ENCODE measurements at regions of chr10 and their contacts with region 1.

Region 1: DNA sequence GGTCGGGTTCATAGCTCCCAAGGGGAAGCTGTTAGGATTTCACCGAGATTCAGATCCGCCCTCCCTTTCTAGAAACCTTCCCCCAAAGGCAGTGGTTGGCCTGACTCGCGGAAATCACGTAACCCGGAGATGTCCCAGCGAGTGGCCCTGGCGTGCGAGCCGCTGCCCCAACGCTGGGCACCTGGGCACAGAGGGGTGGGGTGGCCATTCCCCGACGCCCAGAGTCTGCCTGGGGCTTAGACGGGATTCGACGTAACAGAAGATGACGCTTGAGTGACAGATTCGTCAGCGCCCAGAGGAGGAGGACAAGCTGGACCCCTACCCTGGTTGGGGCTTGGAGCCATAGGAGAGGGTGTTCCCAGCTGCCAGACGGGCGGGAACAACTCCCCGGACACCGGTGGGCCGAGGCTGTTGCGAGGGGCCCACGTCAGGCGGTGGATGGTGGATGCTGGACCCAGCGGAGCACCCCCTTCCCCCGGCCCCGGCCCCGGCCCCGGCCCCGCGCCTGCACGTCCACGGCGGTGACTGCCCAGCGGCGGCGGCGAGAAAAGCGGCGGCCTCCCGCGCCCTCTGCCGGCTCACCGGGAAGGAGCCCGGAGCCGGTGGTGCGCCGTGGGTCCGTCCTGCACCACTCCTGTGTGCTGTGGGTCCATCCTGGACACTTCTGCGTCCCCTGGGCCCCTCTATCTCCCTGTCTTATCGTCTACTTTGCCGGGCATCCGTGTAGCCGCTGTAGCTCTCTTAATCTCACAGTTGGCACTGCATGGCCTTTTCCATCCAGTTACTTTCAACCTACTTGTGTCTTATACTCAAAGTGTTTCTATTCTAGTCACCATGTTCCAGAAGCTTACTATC is 35.4 kb upstream of the KNDC1 start:
- DNase-seq: peak in 2 of 5 donors; percentile 52 to 63
- H3K4me3 ChIP-seq: no peak overlapping the region
- H3K27ac ChIP-seq: no peak overlapping the region
- H3K4me1 ChIP-seq: no peaks in the 10 kb centered on the region
- H3K27me3 ChIP-seq: no peaks in the 10 kb centered on the region
- CTCF ChIP-seq: no peak
- EP300 ChIP-seq: no peak
- POLR2A ChIP-seq: no peak

Region 2: GRCh38 chr10:132654702-132655661 is 469.6 kb before region 1 on chr10:
- intact Hi-C with region 1: loop called in 1 of 4 experiments (anchors 10 kb)
- DNase-seq: peak; percentile 41 to 80 (median 62)
- H3K4me3 ChIP-seq: no peak overlapping the region
- H3K27ac ChIP-seq: no peak overlapping the region
- H3K4me1 ChIP-seq: peaks cover 3% of the 10 kb centered on the region
- H3K27me3 ChIP-seq: no peaks in the 10 kb centered on the region
- CTCF ChIP-seq: peak; percentile 65 to 72 (median 66)
- EP300 ChIP-seq: no peak
- POLR2A ChIP-seq: no peak

Region 3: GRCh38 chr10:132836832-132837540 is 287.6 kb before region 1 on chr10:
- intact Hi-C with region 1: loop called in 3 of 4 experiments (anchors 5 to 10 kb)
- DNase-seq: peak in 2 of 5 donors; percentile 39 to 58
- H3K4me3 ChIP-seq: no peak overlapping the region
- H3K27ac ChIP-seq: no peak overlapping the region
- H3K4me1 ChIP-seq: no peaks in the 10 kb centered on the region
- H3K27me3 ChIP-seq: no peaks in the 10 kb centered on the region
- CTCF ChIP-seq: peak; percentile 35 to 71 (median 71)
- EP300 ChIP-seq: no peak
- POLR2A ChIP-seq: no peak

Region 4: DNA sequence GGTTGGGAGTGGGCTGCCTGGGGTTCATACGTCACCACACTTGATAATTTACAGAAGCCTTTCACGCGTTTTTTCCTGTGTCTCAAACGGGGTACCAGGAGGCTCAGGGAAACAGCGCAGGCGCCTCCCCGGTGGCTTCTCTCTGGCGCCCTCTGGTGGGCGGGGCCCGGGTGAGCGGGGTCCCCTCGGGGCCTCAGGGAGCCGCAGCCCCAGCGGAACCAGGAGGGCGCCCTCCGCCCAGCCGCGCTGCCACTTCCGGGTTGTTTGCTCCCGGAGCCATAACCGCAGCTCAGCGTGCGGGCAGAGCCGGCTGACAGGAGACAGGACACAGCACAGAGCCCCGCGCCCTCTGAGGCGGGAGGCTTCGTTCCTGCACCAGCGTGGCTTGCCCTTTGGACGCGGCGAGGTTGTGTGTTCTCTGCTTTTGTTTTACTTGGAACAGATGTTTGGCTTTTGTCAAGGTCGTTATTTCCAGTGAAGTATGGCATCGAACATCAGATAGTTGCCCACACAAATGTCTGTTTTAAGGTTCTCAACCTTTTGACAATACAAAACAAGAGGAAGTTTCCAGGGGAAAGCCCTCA is 395.7 kb after region 1 on chr10:
- intact Hi-C with region 1: no loop called
- DNase-seq: peak; percentile 77 to 90 (median 83)
- H3K4me3 ChIP-seq: peak overlapping the region; percentile 32
- H3K27ac ChIP-seq: no peak overlapping the region
- H3K4me1 ChIP-seq: no peaks in the 10 kb centered on the region
- H3K27me3 ChIP-seq: no peaks in the 10 kb centered on the region
- CTCF ChIP-seq: peak; percentile 38 to 72 (median 65)
- EP300 ChIP-seq: no peak
- POLR2A ChIP-seq: no peak